ENCODE measurements at regions of chr11 and their contacts with region 1.

Region 1: DNA sequence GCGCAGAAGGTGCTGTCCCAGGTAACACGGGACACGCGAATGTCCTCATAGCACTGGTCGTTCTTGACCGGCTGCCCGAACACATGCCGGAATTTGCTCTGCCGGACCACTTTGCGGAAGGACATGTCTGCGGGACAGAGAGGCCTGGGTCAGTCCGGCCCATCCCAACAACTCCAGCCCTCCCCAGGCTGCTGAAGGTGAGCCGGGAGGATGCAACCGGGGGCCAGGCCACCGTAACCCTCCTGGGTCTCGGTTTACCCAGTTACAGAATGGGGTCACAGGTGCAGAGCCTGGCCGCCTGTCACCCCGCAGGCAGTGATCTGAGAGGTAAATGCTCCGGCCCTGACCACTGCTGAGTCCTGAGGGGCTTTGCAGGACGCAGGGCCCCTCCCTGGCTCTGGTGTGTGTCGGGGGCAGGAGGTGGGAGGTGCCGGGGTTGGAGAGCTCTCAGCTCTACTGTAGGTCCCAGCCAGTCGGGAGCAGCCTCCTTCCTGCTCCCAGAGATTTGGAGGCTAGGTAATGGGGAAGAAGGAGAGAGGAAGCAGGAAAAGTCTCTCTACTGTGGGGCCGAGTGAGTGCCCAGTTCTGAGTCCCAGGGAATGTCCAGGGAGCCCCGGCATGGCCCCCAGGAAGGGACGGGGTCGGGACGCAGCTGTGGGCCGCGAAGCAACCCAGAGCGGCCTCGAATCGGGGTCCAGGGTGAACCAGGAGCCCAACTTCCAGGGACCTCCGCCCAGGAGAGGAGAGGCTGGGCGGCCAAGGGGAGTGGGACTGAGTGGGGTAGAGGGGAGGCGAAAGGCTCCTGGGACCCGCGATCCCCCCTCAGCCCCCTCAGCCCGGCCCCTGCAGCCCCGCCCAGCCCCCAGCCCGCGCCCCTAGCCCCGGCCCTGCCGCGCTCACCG is 521 bp downstream of the CORO1B start:
- DNase-seq: peak in 1 of 2 donors; percentile 39
- ATAC-seq: no peak
- H3K4me3 ChIP-seq: no peak overlapping the region
- H3K4me3 Mint-ChIP-seq: peak overlapping the region; percentile 81
- H3K27ac ChIP-seq: peak overlapping the region; percentile 65
- H3K27ac Mint-ChIP-seq: peak overlapping the region; percentile 89 to 91
- H3K4me1 ChIP-seq: peaks cover 91% of the 10 kb centered on the region
- H3K4me1 Mint-ChIP-seq: peaks cover 57 to 76% of the 10 kb centered on the region in 2 donors
- H3K27me3 ChIP-seq: no peaks in the 10 kb centered on the region
- H3K27me3 Mint-ChIP-seq: no peaks in the 10 kb centered on the region
- CTCF ChIP-seq: no peak

Region 2: GRCh38 chr11:67071420-67072284 is 371.1 kb before region 1 on chr11:
- intact Hi-C with region 1: no loop called
- DNase-seq: peak; percentile 68 to 82
- ATAC-seq: peak; percentile 90 to 99 (median 98)
- H3K4me3 ChIP-seq: peak overlapping the region; percentile 5
- H3K4me3 Mint-ChIP-seq: peak overlapping the region; percentile 74
- H3K27ac ChIP-seq: no peak overlapping the region
- H3K27ac Mint-ChIP-seq: no peak overlapping the region
- H3K4me1 ChIP-seq: peaks cover 9% of the 10 kb centered on the region
- H3K4me1 Mint-ChIP-seq: peaks cover 0 to 7% of the 10 kb centered on the region in 2 donors
- H3K27me3 ChIP-seq: peaks cover 3% of the 10 kb centered on the region
- H3K27me3 Mint-ChIP-seq: peaks cover 0 to 2% of the 10 kb centered on the region in 2 donors
- CTCF ChIP-seq: peak; percentile 87

Region 3: DNA sequence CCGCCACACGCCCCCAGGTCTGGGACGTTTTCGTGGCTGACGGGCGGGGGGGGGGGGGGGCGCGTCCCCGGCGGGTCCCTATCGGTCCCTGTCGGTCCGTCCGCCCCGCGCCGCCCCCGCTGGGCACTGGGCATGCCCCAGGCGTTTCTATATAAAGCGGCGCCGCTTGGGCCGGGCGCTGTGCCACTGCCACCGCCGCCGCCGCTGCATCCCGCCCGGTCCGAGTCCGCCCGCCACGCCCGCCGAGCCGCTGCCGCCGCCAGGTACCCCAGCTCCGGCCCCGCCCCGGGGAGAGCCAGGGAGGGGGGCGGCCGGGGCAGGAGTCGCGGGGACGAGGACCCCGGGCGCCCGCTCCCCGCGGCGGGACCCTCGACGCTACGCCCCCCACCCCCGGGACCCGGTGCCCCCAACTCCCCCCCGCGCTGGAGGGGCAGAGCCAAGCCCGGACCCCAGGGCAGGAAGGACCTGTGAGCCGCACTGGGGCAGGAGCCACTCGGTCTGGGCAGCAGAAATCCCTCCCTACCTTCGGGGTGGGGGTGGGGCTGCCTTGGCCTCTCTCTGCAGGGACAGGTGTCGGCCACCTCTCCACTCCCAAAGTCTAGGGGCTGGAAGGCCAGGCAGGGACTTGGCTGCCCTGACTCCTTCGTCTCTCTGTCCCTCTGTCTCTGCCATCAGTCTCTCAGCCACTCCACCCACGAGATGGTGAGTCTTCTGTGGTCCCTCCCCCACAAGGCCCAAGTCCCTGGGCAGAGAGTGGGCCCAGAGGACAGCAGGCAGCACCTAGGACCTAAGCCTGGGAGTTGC is 27.1 kb before region 1 on chr11 and contains the start of gene CARNS1:
- intact Hi-C with region 1: loop called (anchors 1 kb)
- DNase-seq: peak in 1 of 2 donors; percentile 35
- ATAC-seq: peak in 2 of 3 donors; percentile 19 to 29
- H3K4me3 ChIP-seq: peak within 1 kb of the TSS; percentile 32
- H3K4me3 Mint-ChIP-seq: peak within 1 kb of the TSS; percentile 82
- H3K27ac ChIP-seq: peak within 1 kb of the TSS; percentile 62
- H3K27ac Mint-ChIP-seq: peak within 1 kb of the TSS; percentile 66 to 87
- H3K4me1 ChIP-seq: peaks cover 94% of the 10 kb centered on the region
- H3K4me1 Mint-ChIP-seq: peaks cover 31 to 85% of the 10 kb centered on the region in 2 donors
- H3K27me3 ChIP-seq: no peaks in the 10 kb centered on the region
- H3K27me3 Mint-ChIP-seq: no peaks in the 10 kb centered on the region
- CTCF ChIP-seq: no peak
- total RNA-seq, gene CARNS1: 25.0 to 29.0 (median 25.0) TPM

Measured in natural killer cell (primary cell).